Naive thymus-derived CD4-positive, alpha-beta T cell (primary cell): ENCODE measurements at regions of chr17 and their contacts with region 1.

Region 1: GRCh38 chr17:41082626-41083025 is 1.3 kb upstream of the KRTAP4-7 start:
- DNase-seq: no peak
- ATAC-seq: no peak
- H3K4me3 ChIP-seq: no peak overlapping the region
- H3K4me3 Mint-ChIP-seq: no peak overlapping the region
- H3K27ac ChIP-seq: no peak overlapping the region
- H3K27ac Mint-ChIP-seq: no peak overlapping the region
- H3K4me1 ChIP-seq: no peaks in the 10 kb centered on the region
- H3K4me1 Mint-ChIP-seq: peaks cover 0 to 2% (median 0%) of the 10 kb centered on the region in 7 donors
- H3K27me3 ChIP-seq: no peaks in the 10 kb centered on the region
- H3K27me3 Mint-ChIP-seq: peaks cover 0 to 10% (median 2%) of the 10 kb centered on the region in 5 donors

Region 2: DNA sequence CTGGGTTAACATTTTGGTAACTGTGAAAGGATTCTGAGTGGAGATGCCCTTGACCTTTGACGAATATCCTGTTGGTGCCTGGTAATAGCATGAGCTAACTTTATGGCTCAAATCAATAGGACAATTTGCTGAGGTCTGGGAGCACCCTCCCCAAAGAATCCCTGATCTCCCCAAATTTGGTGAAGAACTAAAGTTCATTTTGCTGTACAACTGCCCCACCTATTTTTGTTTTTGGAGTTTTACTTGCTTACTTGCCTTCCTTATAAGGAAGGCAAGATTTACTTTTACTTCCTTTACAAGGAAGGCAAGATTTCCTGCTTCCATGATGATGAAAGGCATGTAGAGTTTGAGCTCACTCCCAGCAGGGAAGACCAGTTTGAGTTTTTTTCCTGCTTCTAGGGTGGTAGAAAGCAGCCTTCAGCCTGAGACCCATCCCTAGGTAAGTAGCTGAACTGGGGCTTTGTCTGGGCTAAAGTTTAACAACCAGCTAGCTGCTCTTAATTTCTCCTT is 25.4 kb after region 1 on chr17:
- CTCF ChIA-PET with region 1: no interaction called
- POLR2A ChIA-PET with region 1: no interaction called
- intact Hi-C with region 1: loop called in 1 of 2 experiments (anchors 1 kb)
- DNase-seq: no peak
- ATAC-seq: no peak
- H3K4me3 ChIP-seq: no peak overlapping the region
- H3K4me3 Mint-ChIP-seq: peak overlapping the region in 1 of 10 donors; percentile 16
- H3K27ac ChIP-seq: no peak overlapping the region
- H3K27ac Mint-ChIP-seq: peak overlapping the region in 1 of 9 donors; percentile 26
- H3K4me1 ChIP-seq: peaks cover 0 to 7% of the 10 kb centered on the region in 2 donors
- H3K4me1 Mint-ChIP-seq: peaks cover 0 to 25% (median 12%) of the 10 kb centered on the region in 7 donors
- H3K27me3 ChIP-seq: no peaks in the 10 kb centered on the region
- H3K27me3 Mint-ChIP-seq: peaks cover 0 to 12% (median 6%) of the 10 kb centered on the region in 5 donors

Region 3: DNA sequence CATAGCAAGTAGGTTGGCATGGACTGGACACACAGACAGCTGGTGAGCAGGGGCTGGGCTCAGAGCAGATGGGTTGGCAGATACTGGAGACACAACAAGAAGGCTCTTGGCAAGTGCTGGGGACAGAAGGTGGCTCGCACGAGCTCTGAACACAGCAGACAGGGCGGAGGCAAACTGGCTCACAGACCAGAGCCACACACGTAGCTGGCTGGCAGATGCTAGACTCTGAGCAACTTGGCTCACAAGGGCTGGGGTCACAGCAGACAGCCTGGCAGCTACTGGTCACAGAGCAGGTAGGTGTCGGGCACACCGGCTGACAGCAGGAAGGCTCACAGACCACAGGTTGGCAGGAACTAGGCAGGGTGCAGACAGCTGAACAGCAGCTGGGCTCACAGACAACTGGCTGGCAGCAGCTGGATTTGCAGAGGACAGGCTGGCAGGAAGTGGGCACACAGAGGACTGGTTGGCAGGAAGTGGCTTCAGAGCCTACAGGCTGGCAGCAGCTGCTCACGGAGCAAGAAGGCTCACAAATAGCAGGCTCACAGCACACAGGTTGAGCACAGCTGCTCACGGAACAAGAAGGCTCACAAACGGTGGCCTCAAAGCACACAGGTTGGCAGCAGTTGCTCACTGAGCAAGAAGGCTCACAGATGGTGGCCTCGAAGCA is 225.8 kb after region 1 on chr17:
- CTCF ChIA-PET with region 1: no interaction called
- POLR2A ChIA-PET with region 1: no interaction called
- intact Hi-C with region 1: no loop called
- DNase-seq: peak in 8 of 9 donors; percentile 56 to 94 (median 92)
- ATAC-seq: peak; percentile 91
- H3K4me3 ChIP-seq: peak overlapping the region; percentile 24
- H3K4me3 Mint-ChIP-seq: peak overlapping the region; percentile 65 to 89 (median 78)
- H3K27ac ChIP-seq: peak overlapping the region; percentile 75
- H3K27ac Mint-ChIP-seq: peak overlapping the region; percentile 82 to 100 (median 98)
- H3K4me1 ChIP-seq: peaks cover 41 to 49% of the 10 kb centered on the region in 2 donors
- H3K4me1 Mint-ChIP-seq: peaks cover 28 to 80% (median 70%) of the 10 kb centered on the region in 7 donors
- H3K27me3 ChIP-seq: no peaks in the 10 kb centered on the region
- H3K27me3 Mint-ChIP-seq: peaks cover 0 to 8% (median 0%) of the 10 kb centered on the region in 5 donors